ENCODE measurements at regions of chr17 and their contacts with region 1.

Region 1: GRCh38 chr17:62164763-62165753 is 100.0 kb upstream of the MED13 start:
- DNase-seq: no peak
- ATAC-seq: no peak; the same call in 2 of the 3 replicates
- H3K4me3 ChIP-seq: no peak overlapping the region
- H3K27ac ChIP-seq: no peak overlapping the region
- H3K4me1 ChIP-seq: peaks cover 6 to 23% of the 10 kb centered on the region in 2 experiments; a peak in 4 of 5 replicates
- H3K27me3 ChIP-seq: no peaks in the 10 kb centered on the region
- CTCF ChIP-seq: no peak
- EP300 ChIP-seq: no peak
- POLR2A ChIP-seq: no peak
- RAD21 ChIP-seq: no peak

Region 2: DNA sequence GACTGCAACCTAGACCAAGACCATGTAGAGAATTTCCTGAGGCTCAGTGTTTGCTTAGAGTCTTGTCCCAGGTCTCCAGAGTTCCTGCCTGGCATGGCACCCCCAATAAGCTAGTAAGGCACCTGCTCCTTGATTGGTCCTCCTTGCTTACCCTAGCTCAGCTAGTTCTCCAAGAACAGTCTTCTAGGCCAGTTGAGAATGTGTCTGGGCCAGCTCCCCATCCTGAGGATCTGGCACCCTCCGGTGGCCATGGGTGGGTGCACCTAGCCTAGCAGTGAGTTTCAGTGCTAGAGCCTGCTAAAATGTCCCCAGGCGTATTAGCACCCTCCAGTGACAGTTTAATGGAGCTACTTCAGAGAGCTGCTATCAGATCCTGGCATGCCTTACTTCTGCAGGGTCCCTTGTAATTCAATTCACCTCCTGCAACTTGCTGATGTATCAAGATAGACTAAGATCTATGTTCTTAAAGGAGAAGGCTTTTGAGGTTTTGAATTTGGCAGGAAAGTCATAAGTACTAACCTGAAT is 55.6 kb before region 1 on chr17:
- CTCF ChIA-PET with region 1: no interaction called
- POLR2A ChIA-PET with region 1: no interaction called
- in situ Hi-C with region 1: no loop called
- intact Hi-C with region 1: no loop called
- DNase-seq: peak; percentile 86 to 93 (median 89)
- ATAC-seq: peak; percentile 100
- H3K4me3 ChIP-seq: no peak overlapping the region
- H3K27ac ChIP-seq: no peak overlapping the region
- H3K4me1 ChIP-seq: peaks cover 0 to 12% of the 10 kb centered on the region in 2 experiments; a peak in 2 of 5 replicates
- H3K27me3 ChIP-seq: no peaks in the 10 kb centered on the region
- CTCF ChIP-seq: peak; percentile 99 to 100 (median 99)
- EP300 ChIP-seq: peak; percentile 28; the same call in 1 of the 2 replicates
- POLR2A ChIP-seq: no peak
- RAD21 ChIP-seq: peak; percentile 98 to 100

Region 3: GRCh38 chr17:62179534-62180151 is 14.6 kb after region 1 on chr17:
- CTCF ChIA-PET with region 1: no interaction called
- POLR2A ChIA-PET with region 1: interaction called, 10 read pairs
- in situ Hi-C with region 1: no loop called
- intact Hi-C with region 1: no loop called
- DNase-seq: peak; percentile 40 to 85 (median 60)
- ATAC-seq: peak; percentile 83
- H3K4me3 ChIP-seq: no peak overlapping the region
- H3K27ac ChIP-seq: peak overlapping the region; percentile 75; the same call in 2 of the 3 replicates
- H3K4me1 ChIP-seq: peaks cover 0 to 17% of the 10 kb centered on the region in 2 experiments; a peak in 2 of 5 replicates
- H3K27me3 ChIP-seq: no peaks in the 10 kb centered on the region
- CTCF ChIP-seq: peak in 2 of 3 experiments; percentile 34 to 65; a peak in 2 of 6 replicates
- EP300 ChIP-seq: peak; percentile 89
- POLR2A ChIP-seq: no peak
- RAD21 ChIP-seq: peak; percentile 65 to 90

Region 4: DNA sequence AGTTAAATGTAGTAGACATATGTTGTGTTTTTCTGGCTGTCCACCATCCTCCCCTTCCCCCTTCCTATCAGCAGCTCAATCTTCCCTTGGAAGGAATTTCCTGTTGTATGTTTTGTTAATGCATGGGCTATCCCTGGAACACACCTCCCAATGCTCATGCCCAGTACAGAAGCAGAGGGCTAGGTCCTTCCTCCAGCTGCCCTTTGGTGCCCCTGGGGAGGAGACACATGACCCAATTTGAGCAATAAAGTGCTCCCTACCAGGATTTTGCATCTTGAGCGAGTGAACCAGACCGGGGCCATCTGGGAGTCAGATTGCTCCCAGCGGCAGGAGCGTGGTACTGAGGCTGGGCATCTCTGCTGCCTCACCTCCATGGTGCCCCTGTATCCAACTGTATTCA is 41.5 kb after region 1 on chr17:
- CTCF ChIA-PET with region 1: no interaction called
- POLR2A ChIA-PET with region 1: no interaction called
- in situ Hi-C with region 1: no loop called
- intact Hi-C with region 1: no loop called
- DNase-seq: no peak
- ATAC-seq: no peak
- H3K4me3 ChIP-seq: no peak overlapping the region
- H3K27ac ChIP-seq: no peak overlapping the region
- H3K4me1 ChIP-seq: peaks cover 0 to 7% of the 10 kb centered on the region in 2 experiments; a peak in 1 of 5 replicates
- H3K27me3 ChIP-seq: no peaks in the 10 kb centered on the region
- CTCF ChIP-seq: no peak
- EP300 ChIP-seq: no peak
- POLR2A ChIP-seq: no peak
- RAD21 ChIP-seq: no peak

Measured in K562 (cell line).